ENCODE measurements at regions of chr3 and their contacts with region 1.

Region 1: DNA sequence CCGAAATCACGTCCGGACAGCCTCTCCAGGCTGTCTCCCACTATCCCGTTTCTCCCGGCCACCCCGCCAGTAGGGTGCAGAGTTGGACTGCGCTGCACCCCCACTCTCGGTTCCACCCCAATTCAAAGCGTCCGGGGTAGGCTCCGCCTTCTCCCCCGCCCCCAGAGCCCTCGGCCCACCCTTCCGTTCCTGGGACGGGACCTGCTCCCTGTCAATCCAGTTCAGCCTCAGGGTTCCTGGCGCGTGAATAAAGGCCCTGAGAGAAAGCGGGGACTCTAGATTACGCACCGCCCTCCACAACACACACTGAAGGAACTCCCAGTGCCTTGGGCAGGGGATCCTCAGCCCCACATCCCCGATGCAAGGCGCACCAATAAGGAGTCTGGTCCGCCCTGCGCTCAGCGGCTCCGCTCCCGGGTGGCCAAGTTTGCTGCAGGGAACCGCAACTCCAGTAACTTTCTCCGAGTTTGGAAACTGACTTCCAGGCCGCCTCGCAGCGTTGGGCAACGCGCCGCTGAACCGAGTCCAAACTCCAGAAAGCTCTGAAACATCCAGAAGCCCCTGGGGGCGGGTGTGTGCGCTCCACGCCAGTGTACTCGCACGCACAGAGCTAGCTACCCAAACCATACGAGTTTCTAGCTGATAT is 1.9 kb downstream of the ADAMTS9 start:
- DNase-seq: peak; percentile 93 to 97
- ATAC-seq: peak; percentile 87 to 95 (median 92)
- H3K4me3 ChIP-seq: peak overlapping the region; percentile 42 to 90 (median 72)
- H3K27ac ChIP-seq: peak overlapping the region; percentile 75 to 99 (median 96)
- H3K4me1 ChIP-seq: peaks cover 0 to 47% (median 23%) of the 10 kb centered on the region in 9 donors
- H3K27me3 ChIP-seq: peaks cover 0 to 34% (median 0%) of the 10 kb centered on the region in 7 donors
- CTCF ChIP-seq: peak in 8 of 9 donors; percentile 48 to 80 (median 62)

Region 2: GRCh38 chr3:64533617-64534317 is 152.2 kb before region 1 on chr3:
- intact Hi-C with region 1: loop called in 7 of 10 experiments (anchors 2 to 10 kb)
- DNase-seq: peak; percentile 82 to 86
- ATAC-seq: peak; percentile 94 to 97 (median 96)
- H3K4me3 ChIP-seq: peak overlapping the region in 3 of 10 donors; percentile 5 to 23 (median 17)
- H3K27ac ChIP-seq: peak overlapping the region in 5 of 10 donors; percentile 1 to 41 (median 26)
- H3K4me1 ChIP-seq: peaks cover 0 to 23% (median 11%) of the 10 kb centered on the region in 9 donors
- H3K27me3 ChIP-seq: no peaks in the 10 kb centered on the region
- CTCF ChIP-seq: peak; percentile 71 to 97 (median 88)

Region 3: GRCh38 chr3:64667887-64668581 is 17.9 kb before region 1 on chr3:
- intact Hi-C with region 1: loop called in 1 of 10 experiments (anchors 2 kb)
- DNase-seq: peak; percentile 65 to 73
- ATAC-seq: peak; percentile 66 to 93 (median 77)
- H3K4me3 ChIP-seq: peak overlapping the region in 3 of 10 donors; percentile 8 to 14 (median 11)
- H3K27ac ChIP-seq: peak overlapping the region in 9 of 10 donors; percentile 16 to 67 (median 50)
- H3K4me1 ChIP-seq: peaks cover 0 to 89% (median 46%) of the 10 kb centered on the region in 9 donors
- H3K27me3 ChIP-seq: no peaks in the 10 kb centered on the region
- CTCF ChIP-seq: peak in 1 of 9 donors; percentile 13

Region 4: DNA sequence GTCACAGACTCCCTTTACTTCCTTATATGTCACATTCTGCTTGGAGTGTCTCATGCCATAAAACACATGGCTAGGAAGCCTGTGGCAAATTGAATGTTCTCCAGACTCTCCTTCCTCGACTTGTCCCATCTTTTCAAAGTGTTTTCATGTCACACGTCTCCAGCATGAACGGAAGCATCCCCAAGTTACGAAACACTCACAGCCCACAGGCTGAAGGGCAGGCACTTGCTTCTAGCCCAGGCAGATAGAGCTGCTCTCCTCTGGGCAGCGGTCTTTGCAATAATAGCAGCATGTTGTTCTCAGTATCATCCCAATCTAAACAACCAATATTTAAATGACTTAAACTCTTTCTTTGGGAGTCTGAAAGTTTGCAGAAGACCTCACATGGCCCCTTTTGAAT is 87.2 kb after region 1 on chr3:
- intact Hi-C with region 1: no loop called
- DNase-seq: no peak
- ATAC-seq: peak in 2 of 8 donors; percentile 58 to 67
- H3K4me3 ChIP-seq: no peak overlapping the region
- H3K27ac ChIP-seq: no peak overlapping the region
- H3K4me1 ChIP-seq: peaks cover 0 to 16% (median 0%) of the 10 kb centered on the region in 9 donors
- H3K27me3 ChIP-seq: no peaks in the 10 kb centered on the region
- CTCF ChIP-seq: no peak

Region 5: GRCh38 chr3:64884536-64884935 is 198.6 kb after region 1 on chr3:
- intact Hi-C with region 1: loop called in 1 of 10 experiments (anchors 1 kb)
- DNase-seq: no peak
- ATAC-seq: peak in 4 of 8 donors; percentile 13 to 71 (median 41)
- H3K4me3 ChIP-seq: no peak overlapping the region
- H3K27ac ChIP-seq: peak overlapping the region in 6 of 10 donors; percentile 23 to 69 (median 46)
- H3K4me1 ChIP-seq: peaks cover 0 to 27% (median 8%) of the 10 kb centered on the region in 9 donors
- H3K27me3 ChIP-seq: no peaks in the 10 kb centered on the region
- CTCF ChIP-seq: no peak

Region 6: GRCh38 chr3:64903006-64903405 is 217.1 kb after region 1 on chr3:
- intact Hi-C with region 1: loop called in 8 of 10 experiments (anchors 1 to 10 kb)
- DNase-seq: no peak
- ATAC-seq: no peak
- H3K4me3 ChIP-seq: no peak overlapping the region
- H3K27ac ChIP-seq: peak overlapping the region in 9 of 10 donors; percentile 21 to 91 (median 80)
- H3K4me1 ChIP-seq: peaks cover 8 to 84% (median 66%) of the 10 kb centered on the region in 9 donors
- H3K27me3 ChIP-seq: no peaks in the 10 kb centered on the region
- CTCF ChIP-seq: no peak

Region 7: GRCh38 chr3:65080432-65080831 is 394.5 kb after region 1 on chr3:
- intact Hi-C with region 1: loop called in 1 of 10 experiments (anchors 10 kb)
- DNase-seq: peak in 1 of 2 donors; percentile 5
- ATAC-seq: peak in 2 of 8 donors; percentile 48 to 83
- H3K4me3 ChIP-seq: no peak overlapping the region
- H3K27ac ChIP-seq: no peak overlapping the region
- H3K4me1 ChIP-seq: peaks cover 0 to 9% (median 0%) of the 10 kb centered on the region in 9 donors
- H3K27me3 ChIP-seq: no peaks in the 10 kb centered on the region
- CTCF ChIP-seq: peak in 5 of 9 donors; percentile 9 to 47 (median 35)

Region 8: DNA sequence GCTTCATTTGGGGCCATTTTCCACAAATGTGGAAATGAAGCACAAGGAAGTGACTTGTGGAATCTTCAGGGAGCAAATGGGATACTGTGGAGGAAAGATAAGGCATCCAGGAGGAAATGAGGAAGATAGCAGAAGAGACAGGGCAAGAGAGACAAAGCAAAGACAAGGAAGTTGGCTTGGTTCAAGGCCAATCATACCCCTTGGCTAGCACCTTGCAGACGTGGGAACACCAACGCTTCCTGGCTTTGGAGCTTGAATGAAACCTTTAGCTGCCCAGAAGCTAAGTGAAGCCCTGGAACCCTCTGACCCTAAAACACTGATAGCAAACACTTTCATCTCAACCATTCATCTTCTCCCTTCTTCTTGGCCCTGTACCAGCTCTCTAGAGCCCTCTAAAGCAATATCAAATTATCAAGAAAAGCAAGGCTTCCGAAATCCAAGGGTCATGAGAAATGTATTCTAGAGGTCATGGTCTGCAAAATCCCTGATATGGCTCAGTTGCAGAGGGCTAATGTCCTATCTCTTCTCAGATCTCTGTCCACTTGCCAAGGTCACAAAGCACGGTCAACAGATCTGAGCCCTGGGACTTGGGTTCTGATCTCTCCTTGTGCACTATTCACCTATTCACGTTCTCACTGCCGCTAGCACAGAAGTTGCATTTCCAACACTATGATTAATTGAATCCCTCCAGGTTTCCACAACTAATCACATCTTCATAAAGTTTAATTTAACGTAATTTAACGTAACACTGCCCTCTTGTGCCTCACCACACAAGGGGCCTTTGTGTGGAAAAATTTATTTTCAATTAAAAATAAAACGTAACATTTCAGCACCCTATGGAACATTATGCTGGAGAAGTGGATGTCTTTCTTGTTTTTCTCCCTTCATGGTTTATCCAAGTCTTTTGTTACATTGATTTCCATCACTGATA is 559.5 kb after region 1 on chr3:
- intact Hi-C with region 1: loop called in 4 of 10 experiments (anchors 5 to 10 kb)
- DNase-seq: no peak
- ATAC-seq: peak in 4 of 8 donors; percentile 25 to 48 (median 42)
- H3K4me3 ChIP-seq: no peak overlapping the region
- H3K27ac ChIP-seq: no peak overlapping the region
- H3K4me1 ChIP-seq: peaks cover 0 to 11% (median 5%) of the 10 kb centered on the region in 9 donors
- H3K27me3 ChIP-seq: peaks cover 0 to 3% (median 0%) of the 10 kb centered on the region in 7 donors
- CTCF ChIP-seq: peak in 8 of 9 donors; percentile 27 to 71 (median 60)

Measured in heart right ventricle (tissue), 16 donors.